ENCODE measurements at regions of chr6 and their contacts with region 1.

Region 1: DNA sequence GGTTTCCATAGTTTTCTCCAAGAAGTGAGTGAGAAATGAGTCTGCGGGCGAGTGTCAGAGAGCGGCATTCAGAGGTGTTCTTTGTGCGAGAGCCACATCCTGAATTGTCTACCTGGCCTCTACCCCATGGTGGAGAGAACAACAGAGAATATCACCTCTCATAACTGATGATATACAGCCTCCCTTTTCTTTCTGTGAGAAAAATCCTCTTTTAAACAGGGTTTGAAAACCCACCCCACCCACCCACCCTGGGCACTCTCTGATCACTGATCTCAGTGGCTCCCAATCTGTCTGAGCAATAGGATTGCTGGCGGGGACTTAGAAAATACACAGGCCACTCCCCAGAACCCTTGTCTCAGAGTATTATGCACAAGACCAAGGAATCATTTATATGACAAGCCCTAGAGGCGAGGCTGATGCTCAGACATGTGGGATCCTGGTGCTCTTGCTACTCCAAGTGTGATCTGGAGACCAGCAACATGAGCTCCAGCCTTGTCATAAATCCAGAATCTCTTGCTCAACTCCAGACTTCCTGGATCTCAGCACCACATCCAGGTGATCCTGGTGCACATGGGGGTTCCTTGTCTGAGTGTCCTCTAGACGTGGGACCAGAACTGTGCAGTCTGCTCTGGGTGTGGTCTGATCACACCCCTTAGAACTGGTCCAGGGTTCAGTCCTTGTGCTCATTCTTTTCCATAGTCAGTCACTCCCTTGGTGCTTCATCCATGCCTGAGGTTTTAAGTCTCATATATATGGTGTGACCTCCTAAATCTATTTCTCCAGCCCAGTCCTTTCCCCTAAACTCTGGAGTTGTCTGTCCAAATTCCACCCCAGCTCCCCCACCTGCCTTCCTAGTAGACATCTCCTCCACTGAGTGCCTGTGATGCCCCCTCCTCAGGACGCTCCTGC is 5.3 kb downstream of the HLA-B start:
- DNase-seq: peak; percentile 48 to 71 (median 56)
- H3K4me3 ChIP-seq: no peak overlapping the region
- H3K4me3 Mint-ChIP-seq: peak overlapping the region; percentile 62 to 99 (median 98)
- H3K27ac ChIP-seq: peak overlapping the region; percentile 4
- H3K27ac Mint-ChIP-seq: peak overlapping the region; percentile 85 to 100 (median 88)
- H3K4me1 ChIP-seq: peaks cover 54% of the 10 kb centered on the region
- H3K4me1 Mint-ChIP-seq: peaks cover 51 to 74% (median 63%) of the 10 kb centered on the region in 4 donors
- H3K27me3 ChIP-seq: no peaks in the 10 kb centered on the region
- H3K27me3 Mint-ChIP-seq: no peaks in the 10 kb centered on the region

Region 2: GRCh38 chr6:31336896-31337496 is 14.7 kb before region 1 on chr6:
- CTCF ChIA-PET with region 1: no interaction called
- POLR2A ChIA-PET with region 1: interaction called, 13 read pairs
- intact Hi-C with region 1: no loop called
- DNase-seq: no peak
- H3K4me3 ChIP-seq: no peak overlapping the region
- H3K4me3 Mint-ChIP-seq: no peak overlapping the region
- H3K27ac ChIP-seq: no peak overlapping the region
- H3K27ac Mint-ChIP-seq: peak overlapping the region in 2 of 7 donors; percentile 24 to 38
- H3K4me1 ChIP-seq: peaks cover 11% of the 10 kb centered on the region
- H3K4me1 Mint-ChIP-seq: peaks cover 8 to 18% (median 13%) of the 10 kb centered on the region in 4 donors
- H3K27me3 ChIP-seq: no peaks in the 10 kb centered on the region
- H3K27me3 Mint-ChIP-seq: peaks cover 2% of the 10 kb centered on the region in 2 donors

Region 3: GRCh38 chr6:31525932-31526591 is 174.4 kb after region 1 on chr6:
- CTCF ChIA-PET with region 1: no interaction called
- POLR2A ChIA-PET with region 1: no interaction called
- intact Hi-C with region 1: no loop called
- DNase-seq: no peak
- H3K4me3 ChIP-seq: no peak overlapping the region
- H3K4me3 Mint-ChIP-seq: no peak overlapping the region
- H3K27ac ChIP-seq: no peak overlapping the region
- H3K27ac Mint-ChIP-seq: peak overlapping the region in 3 of 7 donors; percentile 24 to 49 (median 42)
- H3K4me1 ChIP-seq: no peaks in the 10 kb centered on the region
- H3K4me1 Mint-ChIP-seq: peaks cover 0 to 6% (median 3%) of the 10 kb centered on the region in 4 donors
- H3K27me3 ChIP-seq: no peaks in the 10 kb centered on the region
- H3K27me3 Mint-ChIP-seq: peaks cover 0 to 2% of the 10 kb centered on the region in 2 donors

Measured in CD4-positive, alpha-beta memory T cell (primary cell).